CD8-positive, alpha-beta T cell (primary cell): ENCODE measurements at regions of chr6 and their contacts with region 1.

Region 1: DNA sequence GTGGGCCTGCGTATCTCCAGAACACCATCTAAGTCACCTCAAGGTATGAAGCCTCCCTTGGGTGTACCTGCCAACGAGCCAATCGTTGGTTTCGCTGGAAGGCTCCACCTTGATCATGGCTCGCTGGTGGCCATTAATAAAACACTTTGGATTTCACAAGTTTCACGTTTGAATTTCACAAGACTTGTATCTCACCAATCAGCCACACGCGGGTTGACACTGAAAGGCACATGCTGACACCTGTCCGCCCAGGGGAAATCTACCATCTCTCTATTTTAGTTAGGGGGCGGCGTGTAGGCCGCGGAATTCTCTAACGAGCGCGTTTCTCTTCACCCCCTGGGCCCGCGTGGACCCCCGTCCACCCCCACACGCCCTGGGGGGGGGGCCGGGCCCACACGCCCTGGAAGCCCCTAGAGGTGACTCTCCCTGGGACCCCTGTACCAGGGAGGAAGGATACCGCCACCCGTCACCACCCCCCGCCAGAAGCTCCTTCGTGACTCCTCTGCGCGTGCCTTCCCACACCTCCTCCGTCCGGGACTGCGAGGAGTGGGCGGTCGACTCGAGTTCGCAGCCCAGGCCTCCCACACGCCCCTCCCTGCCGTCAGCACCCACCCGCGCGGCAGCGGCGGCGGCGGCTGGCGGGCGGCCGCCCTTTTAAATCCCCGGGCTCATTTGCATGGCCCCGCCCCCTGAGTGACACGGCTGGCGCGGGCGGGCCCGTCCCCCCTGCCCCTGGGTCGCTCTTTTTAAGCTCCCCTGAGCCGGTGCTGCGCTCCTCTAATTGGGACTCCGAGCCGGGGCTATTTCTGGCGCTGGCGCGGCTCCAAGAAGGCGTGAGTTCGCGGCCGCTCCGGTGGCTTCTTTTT is at the start of gene HMGA1:
- DNase-seq: peak; percentile 75 to 95 (median 90)
- ATAC-seq: peak; percentile 70
- H3K4me3 ChIP-seq: peak within 1 kb of the TSS; percentile 77 to 90
- H3K4me3 Mint-ChIP-seq: peak within 1 kb of the TSS; percentile 90
- H3K27ac ChIP-seq: peak within 1 kb of the TSS; percentile 71 to 95
- H3K27ac Mint-ChIP-seq: peak within 1 kb of the TSS; percentile 99
- H3K4me1 ChIP-seq: peaks cover 22% of the 10 kb centered on the region
- H3K4me1 Mint-ChIP-seq: peaks cover 33% of the 10 kb centered on the region
- H3K27me3 ChIP-seq: no peaks in the 10 kb centered on the region
- H3K27me3 Mint-ChIP-seq: no peaks in the 10 kb centered on the region
- CTCF ChIP-seq: no peak
- total RNA-seq, gene HMGA1: 107 to 113 TPM

Region 2: GRCh38 chr6:33410050-33410710 is 826.2 kb before region 1 on chr6:
- CTCF ChIA-PET with region 1: no interaction called
- POLR2A ChIA-PET with region 1: no interaction called
- intact Hi-C with region 1: loop called (anchors 5 to 10 kb)
- DNase-seq: peak; percentile 93 to 99 (median 99)
- ATAC-seq: peak; percentile 68
- H3K4me3 ChIP-seq: peak overlapping the region; percentile 82 to 95
- H3K4me3 Mint-ChIP-seq: peak overlapping the region; percentile 88
- H3K27ac ChIP-seq: peak overlapping the region; percentile 94 to 96
- H3K27ac Mint-ChIP-seq: peak overlapping the region; percentile 91
- H3K4me1 ChIP-seq: peaks cover 40% of the 10 kb centered on the region
- H3K4me1 Mint-ChIP-seq: peaks cover 47% of the 10 kb centered on the region
- H3K27me3 ChIP-seq: no peaks in the 10 kb centered on the region
- H3K27me3 Mint-ChIP-seq: no peaks in the 10 kb centered on the region
- CTCF ChIP-seq: no peak

Region 3: GRCh38 chr6:34182751-34183531 is 53.4 kb before region 1 on chr6:
- CTCF ChIA-PET with region 1: no interaction called
- POLR2A ChIA-PET with region 1: interaction called, 3 read pairs
- intact Hi-C with region 1: loop called in 1 of 2 experiments (anchors 5 kb)
- DNase-seq: peak; percentile 48 to 95 (median 72)
- ATAC-seq: peak; percentile 92
- H3K4me3 ChIP-seq: peak overlapping the region in 1 of 2 experiments; percentile 18
- H3K4me3 Mint-ChIP-seq: peak overlapping the region; percentile 44
- H3K27ac ChIP-seq: peak overlapping the region in 1 of 2 experiments; percentile 68
- H3K27ac Mint-ChIP-seq: peak overlapping the region; percentile 87
- H3K4me1 ChIP-seq: peaks cover 21% of the 10 kb centered on the region
- H3K4me1 Mint-ChIP-seq: peaks cover 34% of the 10 kb centered on the region
- H3K27me3 ChIP-seq: no peaks in the 10 kb centered on the region
- H3K27me3 Mint-ChIP-seq: no peaks in the 10 kb centered on the region
- CTCF ChIP-seq: no peak

Region 4: GRCh38 chr6:34223956-34224940 is 12.1 kb before region 1 on chr6:
- CTCF ChIA-PET with region 1: no interaction called
- POLR2A ChIA-PET with region 1: interaction called, 48 read pairs
- intact Hi-C with region 1: loop called (anchors 1 kb)
- DNase-seq: peak; percentile 88 to 99 (median 94)
- ATAC-seq: peak; percentile 98
- H3K4me3 ChIP-seq: peak overlapping the region; percentile 51 to 86
- H3K4me3 Mint-ChIP-seq: peak overlapping the region; percentile 70
- H3K27ac ChIP-seq: peak overlapping the region; percentile 76 to 87
- H3K27ac Mint-ChIP-seq: peak overlapping the region; percentile 89
- H3K4me1 ChIP-seq: peaks cover 14% of the 10 kb centered on the region
- H3K4me1 Mint-ChIP-seq: peaks cover 20% of the 10 kb centered on the region
- H3K27me3 ChIP-seq: no peaks in the 10 kb centered on the region
- H3K27me3 Mint-ChIP-seq: no peaks in the 10 kb centered on the region
- CTCF ChIP-seq: no peak

Region 5: DNA sequence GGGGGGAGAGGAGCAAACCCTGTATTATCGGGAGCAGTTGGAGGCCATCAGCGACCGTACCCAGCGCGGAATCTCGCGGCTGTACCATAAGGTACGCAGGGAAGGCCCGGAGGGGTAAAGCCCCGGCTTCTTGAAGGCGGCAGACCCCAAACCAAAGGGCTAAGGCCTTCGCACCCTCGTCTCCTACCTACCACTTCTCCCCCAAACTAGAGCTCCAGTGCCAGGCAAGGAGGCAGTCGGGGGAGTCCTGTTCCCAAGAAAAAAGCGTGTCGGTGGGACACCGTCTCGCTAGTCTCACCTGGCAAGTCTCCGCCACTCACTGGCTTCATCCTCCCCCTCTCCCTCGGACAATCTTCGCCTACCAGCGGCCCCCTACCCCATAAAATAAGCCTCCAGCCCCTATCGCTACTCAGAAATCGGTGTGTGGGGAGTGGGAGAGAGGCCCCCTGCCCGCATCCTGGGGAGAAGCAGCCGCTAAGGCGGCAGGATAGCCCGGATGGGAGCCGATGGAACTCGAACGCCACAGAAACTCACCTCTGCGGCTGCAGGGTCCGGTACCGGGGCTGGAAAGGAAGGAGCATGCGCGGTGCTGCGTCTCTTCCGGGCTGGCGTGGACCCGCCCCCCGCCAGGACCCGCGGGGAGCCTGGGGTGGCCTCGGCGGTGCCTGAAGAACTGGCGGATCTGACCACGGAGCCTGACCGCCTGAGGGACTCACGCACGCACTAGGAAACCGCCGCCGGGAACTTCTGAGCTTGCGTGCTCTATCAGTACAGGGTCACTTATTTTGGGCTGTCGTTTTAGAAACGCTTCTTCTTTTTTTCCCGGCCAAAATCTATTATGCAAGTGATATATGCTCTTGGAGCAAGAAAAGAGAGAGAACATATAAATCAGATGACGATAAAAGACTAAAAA is 189.4 kb after region 1 on chr6 and contains the start of gene RPS10:
- CTCF ChIA-PET with region 1: no interaction called
- POLR2A ChIA-PET with region 1: interaction called, 5 read pairs
- intact Hi-C with region 1: loop called in 1 of 2 experiments (anchors 1 kb)
- DNase-seq: peak; percentile 79 to 95 (median 89)
- ATAC-seq: peak; percentile 98
- H3K4me3 ChIP-seq: peak within 1 kb of the TSS; percentile 78 to 96
- H3K4me3 Mint-ChIP-seq: peak within 1 kb of the TSS; percentile 96
- H3K27ac ChIP-seq: peak within 1 kb of the TSS; percentile 90 to 95
- H3K27ac Mint-ChIP-seq: peak within 1 kb of the TSS; percentile 97
- H3K4me1 ChIP-seq: peaks cover 23% of the 10 kb centered on the region
- H3K4me1 Mint-ChIP-seq: peaks cover 36% of the 10 kb centered on the region
- H3K27me3 ChIP-seq: no peaks in the 10 kb centered on the region
- H3K27me3 Mint-ChIP-seq: no peaks in the 10 kb centered on the region
- CTCF ChIP-seq: no peak
- total RNA-seq, gene RPS10: 2,721 to 2,770 TPM

Region 6: DNA sequence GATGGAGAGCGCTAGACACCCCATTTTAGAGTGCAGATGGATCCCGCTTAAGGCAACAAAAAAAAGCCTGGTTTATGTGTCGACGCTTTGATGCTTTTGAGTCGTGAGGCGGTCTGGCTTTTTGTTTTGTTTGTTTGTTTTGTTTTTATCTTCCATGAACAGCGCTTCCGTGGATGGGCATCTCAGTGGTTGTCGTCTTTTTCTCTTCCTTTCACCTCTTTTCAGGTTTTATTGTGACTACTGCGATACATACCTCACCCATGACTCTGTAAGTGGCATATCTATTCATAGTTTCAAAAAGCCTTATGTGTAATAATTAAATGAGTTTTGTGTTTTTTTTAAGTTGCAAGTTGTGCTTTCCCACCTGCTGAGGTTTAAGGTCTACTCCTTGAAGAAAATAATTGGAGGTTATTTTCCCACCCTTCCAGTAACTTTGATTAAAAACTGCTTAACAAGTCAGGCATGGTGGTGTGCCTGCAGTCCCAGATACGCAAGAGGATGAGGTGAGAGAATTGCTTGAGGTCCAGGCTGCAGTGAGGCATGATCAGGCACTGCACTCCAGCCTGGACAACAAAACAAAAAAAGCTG is 521.4 kb after region 1 on chr6:
- CTCF ChIA-PET with region 1: no interaction called
- POLR2A ChIA-PET with region 1: interaction called, 3 read pairs
- intact Hi-C with region 1: loop called in 1 of 2 experiments (anchors 1 kb)
- DNase-seq: no peak
- ATAC-seq: no peak
- H3K4me3 ChIP-seq: peak overlapping the region; percentile 71 to 79
- H3K4me3 Mint-ChIP-seq: no peak overlapping the region
- H3K27ac ChIP-seq: peak overlapping the region; percentile 86 to 92
- H3K27ac Mint-ChIP-seq: no peak overlapping the region
- H3K4me1 ChIP-seq: peaks cover 18% of the 10 kb centered on the region
- H3K4me1 Mint-ChIP-seq: peaks cover 20% of the 10 kb centered on the region
- H3K27me3 ChIP-seq: no peaks in the 10 kb centered on the region
- H3K27me3 Mint-ChIP-seq: no peaks in the 10 kb centered on the region
- CTCF ChIP-seq: no peak